CD8-positive, alpha-beta T cell (primary cell): ENCODE measurements at regions of chr13 and their contacts with region 1.

Region 1: DNA sequence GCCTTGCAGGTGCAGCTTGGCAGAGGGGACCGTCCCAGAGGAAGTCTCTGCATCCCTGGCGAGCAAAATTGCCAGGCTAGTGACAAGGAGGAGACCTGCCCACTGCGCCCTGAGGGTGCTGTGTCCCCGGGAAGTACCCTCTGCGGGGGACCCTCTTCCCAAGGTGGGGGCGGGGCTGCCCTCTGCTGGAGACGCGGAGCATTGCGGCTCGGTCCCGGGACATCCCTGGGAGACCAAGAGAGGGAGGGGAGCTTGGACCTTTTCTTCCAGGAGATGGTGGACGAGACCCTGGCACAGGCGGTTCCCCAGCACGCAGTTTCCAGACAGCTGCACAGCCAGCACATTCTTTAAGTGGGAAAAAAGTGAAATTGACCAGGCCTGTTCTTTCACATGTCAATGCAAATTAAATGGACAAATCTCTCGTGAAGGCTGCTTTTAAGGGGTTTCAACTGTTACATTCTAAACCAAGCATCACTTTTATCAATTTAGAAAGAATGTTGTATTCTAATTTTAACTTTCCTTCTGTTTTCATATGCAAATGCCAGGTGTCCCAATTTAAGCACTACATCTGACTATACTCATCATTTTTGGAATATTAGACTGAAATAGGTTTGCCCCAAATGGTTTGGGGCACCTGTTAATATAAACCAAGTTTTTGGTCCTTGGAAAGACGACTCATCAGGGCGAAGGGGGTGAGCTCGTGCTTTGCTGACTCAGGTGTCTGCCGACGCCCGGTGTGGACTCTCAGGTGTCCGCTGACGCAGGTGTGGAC is 60.7 kb downstream of the MCF2L start:
- DNase-seq: peak in 8 of 9 experiments; percentile 32 to 72 (median 57)
- ATAC-seq: peak; percentile 65
- H3K4me3 ChIP-seq: no peak overlapping the region
- H3K4me3 Mint-ChIP-seq: no peak overlapping the region
- H3K27ac ChIP-seq: no peak overlapping the region
- H3K27ac Mint-ChIP-seq: no peak overlapping the region
- H3K4me1 ChIP-seq: no peaks in the 10 kb centered on the region
- H3K4me1 Mint-ChIP-seq: no peaks in the 10 kb centered on the region
- H3K27me3 ChIP-seq: no peaks in the 10 kb centered on the region
- H3K27me3 Mint-ChIP-seq: no peaks in the 10 kb centered on the region
- CTCF ChIP-seq: peak; percentile 86

Region 2: DNA sequence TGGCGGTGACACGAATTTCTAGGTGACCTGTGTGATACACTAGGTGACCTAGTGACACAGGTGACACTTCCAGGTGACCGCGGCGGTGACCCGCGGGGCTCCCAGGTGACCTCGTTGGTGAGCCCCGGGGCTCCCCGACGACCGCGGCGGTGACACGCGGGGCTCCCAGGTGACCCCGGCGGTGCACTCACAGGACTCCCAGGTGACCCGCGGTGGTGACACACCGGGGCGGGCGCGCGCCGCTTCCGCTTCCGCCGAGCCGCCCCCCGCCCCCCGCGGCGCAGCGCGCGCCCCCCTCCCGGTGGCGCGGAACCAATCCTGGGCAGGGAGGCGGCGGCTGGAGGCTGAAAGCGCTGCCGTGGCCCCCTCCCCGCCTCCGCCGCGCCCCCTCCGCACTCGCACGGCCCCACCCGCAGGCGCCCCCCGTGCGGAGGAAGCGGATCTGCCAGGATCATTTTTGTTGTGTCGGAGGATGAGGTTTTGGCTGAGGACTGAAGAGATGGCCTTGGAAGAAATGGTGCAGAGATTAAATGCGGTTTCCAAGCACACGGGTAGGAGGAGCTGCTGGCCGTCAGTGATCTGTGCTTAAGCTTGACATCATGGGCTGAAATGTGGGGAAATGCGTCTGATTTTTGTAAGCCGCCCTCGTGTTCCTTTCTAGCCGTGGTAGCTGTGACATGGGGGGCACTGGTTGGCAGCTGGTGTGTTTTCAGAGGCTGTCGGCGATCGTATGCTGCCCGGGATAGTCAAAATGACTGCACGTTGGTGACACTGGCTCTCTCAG is 60.6 kb before region 1 on chr13 and contains the start of gene MCF2L:
- CTCF ChIA-PET with region 1: interaction called, 12 read pairs
- POLR2A ChIA-PET with region 1: no interaction called
- intact Hi-C with region 1: loop called in 1 of 2 experiments (anchors 1 kb)
- DNase-seq: peak; percentile 31 to 83 (median 69)
- ATAC-seq: peak; percentile 75
- H3K4me3 ChIP-seq: peak within 1 kb of the TSS; percentile 63 to 66
- H3K4me3 Mint-ChIP-seq: peak within 1 kb of the TSS; percentile 96
- H3K27ac ChIP-seq: peak within 1 kb of the TSS; percentile 53 to 69
- H3K27ac Mint-ChIP-seq: peak within 1 kb of the TSS; percentile 95
- H3K4me1 ChIP-seq: peaks cover 23% of the 10 kb centered on the region
- H3K4me1 Mint-ChIP-seq: peaks cover 41% of the 10 kb centered on the region
- H3K27me3 ChIP-seq: no peaks in the 10 kb centered on the region
- H3K27me3 Mint-ChIP-seq: no peaks in the 10 kb centered on the region
- CTCF ChIP-seq: no peak
- total RNA-seq, gene MCF2L: 13.7 to 15.0 TPM

Region 3: GRCh38 chr13:113545455-113545930 is 515.8 kb after region 1 on chr13:
- CTCF ChIA-PET with region 1: no interaction called
- POLR2A ChIA-PET with region 1: no interaction called
- intact Hi-C with region 1: no loop called
- DNase-seq: no peak
- ATAC-seq: no peak
- H3K4me3 ChIP-seq: no peak overlapping the region
- H3K4me3 Mint-ChIP-seq: no peak overlapping the region
- H3K27ac ChIP-seq: no peak overlapping the region
- H3K27ac Mint-ChIP-seq: no peak overlapping the region
- H3K4me1 ChIP-seq: no peaks in the 10 kb centered on the region
- H3K4me1 Mint-ChIP-seq: peaks cover 5% of the 10 kb centered on the region
- H3K27me3 ChIP-seq: no peaks in the 10 kb centered on the region
- H3K27me3 Mint-ChIP-seq: no peaks in the 10 kb centered on the region
- CTCF ChIP-seq: no peak